GM12878 (cell line): ENCODE measurements at regions of chr10 and their contacts with region 1.

Region 1: DNA sequence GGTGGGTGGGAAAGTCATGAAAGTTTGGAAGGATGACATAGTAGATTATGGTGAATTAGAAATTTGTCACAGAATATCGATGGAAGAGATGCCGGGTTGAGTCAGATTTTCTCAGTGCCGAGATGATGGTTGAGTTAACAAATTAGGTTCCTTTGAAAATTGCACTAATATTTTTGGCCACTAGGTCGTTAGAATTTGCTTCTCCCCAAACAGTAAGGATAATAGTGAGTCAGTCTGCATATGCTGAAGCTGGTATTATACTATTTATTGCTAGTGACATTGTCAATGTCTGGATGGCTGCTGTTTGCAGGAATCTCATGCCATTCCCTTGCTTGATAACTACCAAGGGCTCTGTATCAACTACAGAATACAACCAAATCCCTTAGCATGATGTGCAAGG is 37.7 kb upstream of the MINDY3 start:
- DNase-seq: no peak
- ATAC-seq: peak; percentile 51; the same call in 1 of the 3 replicates
- H3K4me3 ChIP-seq: no peak overlapping the region
- H3K27ac ChIP-seq: no peak overlapping the region
- H3K4me1 ChIP-seq: no peaks in the 10 kb centered on the region
- H3K27me3 ChIP-seq: no peaks in the 10 kb centered on the region
- CTCF ChIP-seq: peak; percentile 12 to 29 (median 26); a peak in 3 of 6 replicates
- EP300 ChIP-seq: no peak
- POLR2A ChIP-seq: no peak
- RAD21 ChIP-seq: no peak

Region 2: DNA sequence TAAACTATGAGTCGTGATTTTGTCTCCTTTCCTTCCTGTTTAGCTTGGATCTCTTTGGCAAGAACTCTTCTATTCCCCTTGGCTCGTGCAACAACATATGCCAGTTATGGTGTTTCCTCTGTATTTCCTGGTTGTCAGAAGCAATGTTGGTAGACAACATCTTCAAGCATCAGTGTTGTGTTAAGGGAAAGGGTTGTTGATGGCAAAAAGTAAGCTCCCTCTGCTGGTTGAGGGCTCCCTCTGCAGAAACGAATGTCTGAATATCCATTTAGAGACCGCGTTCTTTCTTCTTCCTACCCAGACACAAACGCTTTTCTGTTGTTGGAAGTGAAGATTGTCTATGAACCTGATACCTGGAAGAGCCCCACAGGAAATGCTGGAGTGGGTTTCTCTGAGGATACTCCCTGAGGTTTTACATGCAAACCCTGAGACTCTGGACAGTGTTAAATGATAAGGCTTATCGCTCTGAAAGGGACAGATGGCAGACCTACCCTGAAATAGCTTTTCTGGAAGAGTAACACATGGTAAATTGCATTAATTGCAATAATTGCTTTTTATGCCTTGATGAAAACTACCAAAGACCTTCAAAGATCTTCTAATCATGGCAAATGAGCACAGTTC is 647.2 kb after region 1 on chr10:
- CTCF ChIA-PET with region 1: interaction called, 12 read pairs
- POLR2A ChIA-PET with region 1: no interaction called
- RAD21 ChIA-PET with region 1: interaction called, 3 read pairs
- SMC1A ChIA-PET with region 1: interaction called, 9 read pairs
- in situ Hi-C with region 1: loop called (anchors 10 kb)
- intact Hi-C with region 1: loop called (anchors 5 kb)
- DNase-seq: no peak
- ATAC-seq: peak; percentile 95
- H3K4me3 ChIP-seq: no peak overlapping the region
- H3K27ac ChIP-seq: no peak overlapping the region
- H3K4me1 ChIP-seq: no peaks in the 10 kb centered on the region
- H3K27me3 ChIP-seq: peaks cover 0 to 3% of the 10 kb centered on the region in 2 experiments; a peak in 1 of 4 replicates
- CTCF ChIP-seq: peak; percentile 72 to 85 (median 78)
- EP300 ChIP-seq: no peak
- POLR2A ChIP-seq: no peak
- RAD21 ChIP-seq: peak; percentile 61

Region 3: DNA sequence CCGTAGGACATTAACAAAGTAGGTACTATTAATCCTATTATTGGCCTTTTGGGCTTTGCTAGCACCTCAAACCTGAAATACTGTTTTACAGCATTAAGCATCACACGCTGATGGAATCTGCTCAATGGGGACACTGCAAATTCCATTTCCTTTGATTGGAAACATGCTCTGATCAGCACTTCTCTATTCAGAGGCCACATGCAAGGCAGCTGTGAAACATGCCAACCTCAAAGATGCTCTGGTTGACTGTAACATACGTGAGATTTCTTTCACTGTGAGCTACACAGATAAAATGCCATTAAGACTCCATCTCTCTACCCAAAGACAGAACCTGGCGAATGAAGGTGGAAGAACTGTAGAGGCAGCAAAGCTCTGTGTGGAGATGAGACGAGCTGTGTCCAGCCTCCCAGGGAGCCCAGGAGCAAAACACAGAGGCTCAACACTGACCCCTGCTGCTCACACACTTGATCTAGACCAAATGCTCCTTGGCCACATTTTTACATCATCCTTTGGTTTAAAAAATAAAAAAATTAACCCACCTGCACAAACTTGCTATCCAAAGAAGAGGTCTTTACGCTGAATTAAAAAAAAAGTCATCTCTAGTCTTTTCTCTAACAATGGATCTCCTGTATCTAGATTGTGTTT is 911.1 kb after region 1 on chr10:
- CTCF ChIA-PET with region 1: interaction called, 20 read pairs
- POLR2A ChIA-PET with region 1: no interaction called
- RAD21 ChIA-PET with region 1: interaction called, 15 read pairs
- SMC1A ChIA-PET with region 1: interaction called, 4 read pairs
- in situ Hi-C with region 1: loop called (anchors 10 kb)
- intact Hi-C with region 1: loop called (anchors 10 kb)
- DNase-seq: no peak
- ATAC-seq: peak; percentile 96
- H3K4me3 ChIP-seq: no peak overlapping the region
- H3K27ac ChIP-seq: no peak overlapping the region
- H3K4me1 ChIP-seq: no peaks in the 10 kb centered on the region
- H3K27me3 ChIP-seq: no peaks in the 10 kb centered on the region
- CTCF ChIP-seq: peak; percentile 69 to 70 (median 69)
- EP300 ChIP-seq: no peak
- POLR2A ChIP-seq: no peak
- RAD21 ChIP-seq: peak; percentile 79